Right cardiac atrium (tissue), 5 donors: ENCODE measurements at regions of chr18 and their contacts with region 1.

Region 1: GRCh38 chr18:59402432-59403090 is 43.5 kb upstream of the LMAN1 start:
- DNase-seq: peak; percentile 56 to 76 (median 75)
- ATAC-seq: peak; percentile 89 to 93
- H3K4me3 ChIP-seq: no peak overlapping the region
- H3K27ac ChIP-seq: no peak overlapping the region
- H3K4me1 ChIP-seq: no peaks in the 10 kb centered on the region
- H3K27me3 ChIP-seq: no peaks in the 10 kb centered on the region

Region 2: DNA sequence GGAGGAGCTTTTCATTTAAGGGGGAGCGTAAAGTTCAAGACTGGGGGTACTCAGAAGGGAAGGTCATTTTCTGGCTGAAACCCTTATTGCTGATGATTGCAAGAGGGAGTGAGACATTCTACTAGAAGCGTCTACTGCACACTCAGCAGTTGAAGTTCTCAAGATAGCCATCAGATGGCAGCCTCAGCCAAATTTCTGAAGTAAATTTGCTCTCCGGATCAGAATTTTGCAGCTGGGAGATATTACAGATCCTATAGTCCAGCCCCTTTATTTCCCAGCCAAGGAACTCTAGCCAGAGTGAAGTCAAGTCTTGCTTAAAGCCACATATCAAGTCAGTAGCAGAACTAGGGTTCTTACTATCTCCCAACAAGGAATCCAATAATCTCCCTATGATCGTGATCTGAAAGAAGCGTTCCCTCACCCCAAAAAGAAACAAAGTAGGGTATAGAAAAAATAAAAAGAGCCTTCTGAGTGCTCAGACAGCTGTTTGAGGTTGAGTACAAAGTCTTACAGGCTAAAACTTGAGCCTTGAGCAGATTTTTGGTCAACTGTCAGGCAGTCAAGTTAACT is 153.3 kb before region 1 on chr18:
- intact Hi-C with region 1: loop called in 3 of 4 experiments (anchors 5 to 10 kb)
- DNase-seq: no peak
- ATAC-seq: peak; percentile 57 to 68
- H3K4me3 ChIP-seq: no peak overlapping the region
- H3K27ac ChIP-seq: no peak overlapping the region
- H3K4me1 ChIP-seq: no peaks in the 10 kb centered on the region
- H3K27me3 ChIP-seq: peaks cover 4% of the 10 kb centered on the region

Region 3: DNA sequence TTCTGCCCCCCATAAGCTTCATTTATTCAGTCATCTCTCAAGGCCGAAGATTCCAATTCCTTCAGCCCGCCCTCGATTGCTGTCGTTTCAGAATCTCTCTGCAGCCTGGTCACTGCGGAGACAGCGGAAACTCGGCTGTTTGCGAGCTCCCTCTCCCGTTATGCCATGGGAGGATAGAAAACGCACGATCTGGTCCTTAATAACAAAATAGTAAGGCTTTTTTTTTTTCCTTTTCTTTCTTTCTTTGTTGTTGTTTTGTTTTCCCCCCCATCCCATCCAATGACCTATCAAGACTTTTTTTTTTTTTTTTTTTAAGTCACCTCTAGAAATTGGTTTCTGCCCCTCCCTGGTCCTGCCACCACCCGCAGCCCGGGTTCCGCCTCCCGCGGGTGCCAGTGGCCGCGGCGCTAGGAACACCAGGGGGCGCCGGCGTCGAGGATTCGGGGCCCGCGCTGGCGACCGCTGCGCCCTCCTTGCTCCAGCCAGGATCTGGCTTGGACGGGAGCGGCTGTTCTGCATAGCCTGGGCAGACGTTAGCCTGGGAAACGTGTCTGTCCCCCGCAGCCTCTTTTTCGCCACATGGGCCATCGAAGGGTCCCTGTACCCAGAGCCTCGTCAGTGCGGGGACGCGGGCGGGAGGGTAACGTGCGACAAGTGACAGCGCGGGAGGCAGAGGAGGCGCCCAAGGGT is 94.2 kb before region 1 on chr18:
- intact Hi-C with region 1: loop called (anchors 5 kb)
- DNase-seq: peak; percentile 78 to 93 (median 92)
- ATAC-seq: peak; percentile 97 to 98
- H3K4me3 ChIP-seq: peak overlapping the region; percentile 3
- H3K27ac ChIP-seq: no peak overlapping the region
- H3K4me1 ChIP-seq: no peaks in the 10 kb centered on the region
- H3K27me3 ChIP-seq: no peaks in the 10 kb centered on the region

Region 4: DNA sequence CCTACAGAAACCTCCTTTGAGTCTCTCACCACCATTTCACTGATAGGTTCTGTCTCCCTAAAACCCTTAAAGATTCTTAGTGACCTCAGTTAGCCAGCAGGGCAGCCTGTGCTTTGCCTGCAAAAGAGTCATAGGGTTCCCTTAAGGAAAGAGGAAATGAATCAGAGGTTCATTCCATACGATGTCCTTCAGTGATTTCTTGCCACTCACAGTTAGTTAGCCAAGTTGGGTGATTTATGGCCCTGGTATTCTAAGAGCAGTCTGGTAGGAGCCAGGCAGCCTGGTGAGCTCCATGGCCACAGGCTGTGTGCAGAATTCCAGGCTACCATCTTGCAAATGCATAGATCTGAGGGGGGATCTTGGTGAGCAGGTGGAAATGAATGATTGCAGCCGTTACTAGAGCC is 313.4 kb after region 1 on chr18:
- intact Hi-C with region 1: no loop called
- DNase-seq: no peak
- ATAC-seq: no peak
- H3K4me3 ChIP-seq: no peak overlapping the region
- H3K27ac ChIP-seq: no peak overlapping the region
- H3K4me1 ChIP-seq: no peaks in the 10 kb centered on the region
- H3K27me3 ChIP-seq: no peaks in the 10 kb centered on the region